WTC11 (cell line): ENCODE measurements at regions of chr1 and their contacts with region 1.

Region 1: DNA sequence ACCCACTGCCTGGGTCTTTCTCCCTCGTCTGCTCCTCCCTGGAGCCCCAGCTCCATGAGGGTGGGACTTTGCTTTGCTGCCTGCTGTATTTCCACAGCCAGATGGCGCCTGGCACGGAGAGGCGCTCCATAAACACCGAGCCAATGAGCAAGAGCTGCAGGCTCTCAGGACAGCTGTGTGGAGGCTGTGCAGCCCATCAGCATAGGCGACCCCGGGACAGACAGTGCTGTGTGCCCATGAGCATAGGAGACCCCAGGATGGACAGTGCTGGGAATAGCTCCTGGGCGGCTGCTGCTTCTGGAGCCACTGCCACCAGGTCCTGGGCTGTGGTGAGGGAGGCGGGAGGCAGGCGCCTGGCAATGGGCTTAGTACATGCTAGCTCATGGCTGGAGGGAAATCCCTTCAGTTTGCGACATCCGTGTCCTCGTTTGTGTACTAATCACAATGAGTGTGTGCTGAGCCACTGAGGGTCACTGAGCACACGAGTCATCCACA is 29.2 kb downstream of the CEP104 start:
- DNase-seq: peak; percentile 65
- ATAC-seq: peak; percentile 95
- H3K4me3 Mint-ChIP-seq: no peak overlapping the region
- H3K27ac Mint-ChIP-seq: no peak overlapping the region
- H3K4me1 Mint-ChIP-seq: no peaks in the 10 kb centered on the region
- H3K27me3 Mint-ChIP-seq: no peaks in the 10 kb centered on the region
- CTCF ChIP-seq: no peak

Region 2: GRCh38 chr1:3775490-3776230 is 52.2 kb before region 1 on chr1:
- CTCF ChIA-PET with region 1: interaction called, 11 read pairs
- POLR2A ChIA-PET with region 1: no interaction called
- DNase-seq: peak; percentile 64
- ATAC-seq: peak; percentile 12
- H3K4me3 Mint-ChIP-seq: no peak overlapping the region; the same call in 1 of the 2 replicates
- H3K27ac Mint-ChIP-seq: no peak overlapping the region
- H3K4me1 Mint-ChIP-seq: peaks cover 22% of the 10 kb centered on the region
- H3K27me3 Mint-ChIP-seq: no peaks in the 10 kb centered on the region; the same call in none of the 2 replicates
- CTCF ChIP-seq: peak; percentile 27; the same call in 1 of the 2 replicates

Region 3: GRCh38 chr1:3796215-3797061 is 31.4 kb before region 1 on chr1 and contains the start of gene LRRC47:
- CTCF ChIA-PET with region 1: interaction called, 10 read pairs
- POLR2A ChIA-PET with region 1: no interaction called
- DNase-seq: peak; percentile 86
- ATAC-seq: peak; percentile 82
- H3K4me3 Mint-ChIP-seq: peak within 1 kb of the TSS; percentile 92
- H3K27ac Mint-ChIP-seq: peak within 1 kb of the TSS; percentile 100
- H3K4me1 Mint-ChIP-seq: peaks cover 40% of the 10 kb centered on the region
- H3K27me3 Mint-ChIP-seq: peaks cover 7% of the 10 kb centered on the region
- CTCF ChIP-seq: no peak
- total RNA-seq, gene LRRC47: 70.6 to 92.4 TPM (median 71.0 TPM) in 3 replicates

Region 4: GRCh38 chr1:3856908-3857790 is 29.3 kb after region 1 on chr1 and contains the starts of genes CEP104 and DFFB:
- CTCF ChIA-PET with region 1: interaction called, 17 read pairs
- POLR2A ChIA-PET with region 1: no interaction called
- DNase-seq: peak; percentile 96
- ATAC-seq: peak; percentile 95
- H3K4me3 Mint-ChIP-seq: peak within 1 kb of the TSS; percentile 96
- H3K27ac Mint-ChIP-seq: peak within 1 kb of the TSS; percentile 45; the same call in 1 of the 2 replicates
- H3K4me1 Mint-ChIP-seq: peaks cover 18% of the 10 kb centered on the region
- H3K27me3 Mint-ChIP-seq: peaks cover 8% of the 10 kb centered on the region
- CTCF ChIP-seq: no peak
- total RNA-seq, gene CEP104: 38.0 to 38.8 TPM (median 38.2 TPM) in 3 replicates
- total RNA-seq, gene DFFB: 8.5 to 9.2 TPM (median 8.7 TPM) in 3 replicates

Region 5: DNA sequence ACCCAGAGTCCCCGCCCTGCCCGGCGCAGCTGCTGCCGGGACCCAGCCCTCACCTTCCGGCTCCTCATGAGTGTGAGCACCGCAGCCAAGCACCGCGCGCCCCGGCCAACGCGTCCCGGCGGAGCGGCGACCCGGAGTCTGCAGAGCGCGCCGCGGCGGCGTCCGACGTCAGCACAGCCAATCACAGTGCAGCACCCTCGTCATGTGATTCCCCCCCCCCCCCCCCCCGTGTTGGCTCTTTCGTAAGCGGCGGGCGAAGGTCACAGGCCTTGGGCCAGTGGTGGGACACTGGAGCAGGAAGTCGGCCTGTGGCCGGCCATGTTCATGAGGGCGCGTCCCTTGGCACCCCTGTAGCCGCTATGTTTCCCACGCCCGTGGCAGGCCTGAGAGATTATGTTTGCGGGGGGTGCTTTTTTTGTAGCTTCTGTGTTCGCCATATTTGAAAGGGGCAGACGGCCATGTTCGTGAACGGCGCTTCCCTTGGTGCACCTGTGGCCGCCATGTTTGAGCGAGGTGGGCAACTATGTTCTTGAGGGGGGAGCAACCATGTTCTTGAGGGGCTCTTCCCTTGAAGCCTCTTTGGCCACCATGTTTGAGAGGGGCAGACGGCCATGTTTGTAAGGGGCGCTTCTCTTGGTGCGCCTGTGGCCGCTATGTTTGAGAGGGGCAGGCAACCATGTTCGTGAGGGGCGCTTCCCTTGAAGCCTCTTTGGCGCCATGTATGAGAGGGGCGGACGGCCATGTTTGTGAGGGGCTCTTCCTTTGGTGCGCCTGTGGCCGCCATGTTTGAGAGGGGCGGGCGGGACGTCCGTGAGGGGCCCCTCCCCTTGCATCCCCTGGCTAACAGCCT is 72.5 kb after region 1 on chr1 and contains the start of gene C1orf174:
- CTCF ChIA-PET with region 1: interaction called, 19 read pairs
- POLR2A ChIA-PET with region 1: no interaction called
- DNase-seq: peak; percentile 93
- ATAC-seq: peak; percentile 84
- H3K4me3 Mint-ChIP-seq: peak within 1 kb of the TSS; percentile 92
- H3K27ac Mint-ChIP-seq: peak within 1 kb of the TSS; percentile 99
- H3K4me1 Mint-ChIP-seq: peaks cover 23% of the 10 kb centered on the region
- H3K27me3 Mint-ChIP-seq: no peaks in the 10 kb centered on the region
- CTCF ChIP-seq: no peak
- total RNA-seq, gene C1orf174: 24.2 to 25.2 TPM (median 25.1 TPM) in 3 replicates